Spleen (tissue), 13 donors: ENCODE measurements at regions of chr6 and their contacts with region 1.

Region 1: DNA sequence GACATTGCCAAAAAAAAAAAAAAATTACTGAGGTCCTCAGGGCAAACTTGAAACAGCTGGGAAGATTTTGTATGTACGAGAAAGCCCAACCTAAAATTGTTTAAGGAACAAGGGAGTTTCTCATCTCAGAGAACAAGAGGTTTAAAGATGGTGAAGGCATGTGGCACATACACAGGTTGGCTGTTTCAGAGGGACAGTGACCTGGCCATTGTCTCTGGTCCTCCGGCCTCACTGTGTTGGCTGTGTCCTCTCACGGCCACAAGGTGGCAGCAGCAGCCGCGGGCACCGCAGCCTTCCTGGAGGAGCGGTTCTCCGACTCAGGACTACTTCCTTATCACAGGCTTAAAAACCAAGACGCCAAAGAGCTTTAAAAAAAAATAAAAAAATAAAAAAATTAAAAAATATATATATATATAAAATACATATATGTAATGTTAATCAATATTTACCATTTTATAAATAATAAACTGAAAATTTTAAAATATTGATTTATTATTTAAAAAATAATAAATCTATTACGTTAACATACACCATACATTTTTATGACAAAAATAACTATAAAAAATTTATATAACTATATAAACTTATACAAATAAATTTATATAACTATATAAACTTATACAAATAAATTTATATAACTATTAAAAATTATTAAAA is 52.8 kb downstream of the GTF2H5 start:
- DNase-seq: peak; percentile 96
- H3K4me3 ChIP-seq: no peak overlapping the region
- H3K27ac ChIP-seq: no peak overlapping the region
- H3K4me1 ChIP-seq: peaks cover 0 to 9% (median 0%) of the 10 kb centered on the region in 6 donors
- H3K27me3 ChIP-seq: no peaks in the 10 kb centered on the region
- CTCF ChIP-seq: peak; percentile 79 to 97 (median 91)
- POLR2A ChIP-seq: no peak

Region 2: GRCh38 chr6:158387036-158387435 is 166.1 kb after region 1 on chr6:
- intact Hi-C with region 1: loop called (anchors 10 kb)
- DNase-seq: no peak
- H3K4me3 ChIP-seq: no peak overlapping the region
- H3K27ac ChIP-seq: no peak overlapping the region
- H3K4me1 ChIP-seq: no peaks in the 10 kb centered on the region
- H3K27me3 ChIP-seq: no peaks in the 10 kb centered on the region
- CTCF ChIP-seq: peak in 1 of 11 experiments; percentile 26
- POLR2A ChIP-seq: no peak

Region 3: DNA sequence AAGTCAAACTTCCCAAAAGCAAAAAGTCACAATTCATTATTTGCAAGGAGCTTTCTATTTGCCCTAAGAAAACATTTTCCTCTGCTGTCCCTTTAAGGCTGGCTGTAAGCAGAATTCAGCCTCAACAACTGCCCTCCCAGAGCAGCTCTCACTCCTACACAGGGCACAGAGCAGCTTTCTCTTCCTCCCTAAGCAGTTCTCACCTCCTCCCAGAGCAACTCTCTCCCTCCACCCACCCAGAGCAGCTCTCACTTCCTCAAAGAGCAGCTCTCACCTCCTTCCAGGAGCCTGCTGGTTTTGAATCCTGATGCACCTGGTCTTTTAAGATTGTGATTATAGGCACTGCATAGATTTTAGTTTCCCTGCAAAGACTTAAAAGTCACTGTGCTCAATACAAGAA is 218.3 kb after region 1 on chr6:
- intact Hi-C with region 1: no loop called
- DNase-seq: no peak
- H3K4me3 ChIP-seq: no peak overlapping the region
- H3K27ac ChIP-seq: no peak overlapping the region
- H3K4me1 ChIP-seq: peaks cover 0 to 10% (median 0%) of the 10 kb centered on the region in 6 donors
- H3K27me3 ChIP-seq: no peaks in the 10 kb centered on the region
- CTCF ChIP-seq: no peak
- POLR2A ChIP-seq: no peak

Region 4: DNA sequence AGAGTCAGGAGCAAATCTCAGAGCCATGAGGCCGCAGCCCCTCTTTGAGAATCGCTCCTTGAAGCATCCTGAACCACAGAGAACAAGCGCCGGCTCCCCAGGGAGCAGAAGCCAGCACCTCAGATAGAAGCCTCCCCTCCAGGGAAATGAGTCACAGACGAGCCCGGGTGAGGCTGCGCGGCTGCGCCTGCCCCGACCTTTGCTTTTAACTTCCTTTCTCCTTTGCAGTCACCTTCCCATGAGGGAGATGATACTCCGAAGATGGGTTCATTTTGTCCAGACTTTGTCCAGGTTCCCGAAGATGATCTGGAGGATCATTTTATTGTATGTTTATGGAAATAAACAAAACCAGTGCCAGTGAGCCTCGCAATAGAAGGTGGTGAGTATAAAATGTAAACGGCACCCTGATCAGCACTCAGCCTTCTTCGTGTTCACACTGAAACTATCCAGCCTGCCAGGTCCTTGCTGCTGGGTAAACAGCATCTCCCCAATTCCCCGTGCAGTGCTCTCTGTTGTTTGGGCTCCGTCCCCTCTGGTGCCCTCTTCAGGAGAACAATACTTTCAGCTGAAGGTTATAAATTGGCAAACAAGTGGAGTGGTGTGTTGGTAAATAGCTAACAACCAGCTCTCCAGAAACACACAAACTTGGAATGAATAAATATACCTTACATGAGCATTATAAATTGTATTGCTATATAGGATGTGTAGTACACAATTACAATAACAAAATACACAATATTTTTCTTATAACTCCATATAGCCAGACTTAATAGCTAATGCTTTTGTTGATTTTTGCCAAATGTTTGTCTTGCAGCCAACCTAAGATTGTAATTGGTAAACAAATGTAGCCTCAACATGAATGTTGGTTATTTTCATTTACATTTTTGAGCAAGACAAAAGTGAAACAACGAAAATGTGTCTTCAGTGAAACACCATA is 297.5 kb after region 1 on chr6:
- intact Hi-C with region 1: loop called (anchors 10 kb)
- DNase-seq: no peak
- H3K4me3 ChIP-seq: peak overlapping the region in 5 of 8 donors; percentile 0 to 58 (median 13)
- H3K27ac ChIP-seq: peak overlapping the region in 2 of 8 donors; percentile 36 to 51
- H3K4me1 ChIP-seq: peaks cover 6 to 40% (median 17%) of the 10 kb centered on the region in 6 donors
- H3K27me3 ChIP-seq: peaks cover 0 to 72% (median 35%) of the 10 kb centered on the region in 7 donors
- CTCF ChIP-seq: peak in 8 of 11 experiments; percentile 12 to 57 (median 47)
- POLR2A ChIP-seq: no peak

Region 5: DNA sequence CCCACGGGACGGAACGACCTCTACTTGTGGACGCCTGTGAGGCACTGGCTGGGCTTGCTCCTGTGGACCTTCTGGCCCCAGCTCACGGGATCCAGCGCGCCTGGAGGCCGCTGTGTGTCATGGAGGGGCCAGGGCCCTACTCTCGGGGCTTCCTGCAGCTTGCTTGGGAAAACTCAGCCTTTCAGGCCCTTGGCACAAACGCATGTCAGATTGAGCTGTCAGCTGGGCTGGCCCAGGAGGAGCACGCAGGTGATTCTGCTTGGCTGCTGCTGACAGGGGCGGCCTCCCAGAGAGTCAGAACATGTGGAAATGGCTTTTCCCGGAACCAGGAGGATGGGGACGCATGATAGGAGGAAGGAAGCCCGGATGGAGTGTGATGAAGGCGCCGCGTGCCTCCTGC is 378.7 kb after region 1 on chr6:
- intact Hi-C with region 1: loop called (anchors 5 kb)
- DNase-seq: no peak
- H3K4me3 ChIP-seq: no peak overlapping the region
- H3K27ac ChIP-seq: no peak overlapping the region
- H3K4me1 ChIP-seq: no peaks in the 10 kb centered on the region
- H3K27me3 ChIP-seq: no peaks in the 10 kb centered on the region
- CTCF ChIP-seq: no peak
- POLR2A ChIP-seq: no peak

Region 6: DNA sequence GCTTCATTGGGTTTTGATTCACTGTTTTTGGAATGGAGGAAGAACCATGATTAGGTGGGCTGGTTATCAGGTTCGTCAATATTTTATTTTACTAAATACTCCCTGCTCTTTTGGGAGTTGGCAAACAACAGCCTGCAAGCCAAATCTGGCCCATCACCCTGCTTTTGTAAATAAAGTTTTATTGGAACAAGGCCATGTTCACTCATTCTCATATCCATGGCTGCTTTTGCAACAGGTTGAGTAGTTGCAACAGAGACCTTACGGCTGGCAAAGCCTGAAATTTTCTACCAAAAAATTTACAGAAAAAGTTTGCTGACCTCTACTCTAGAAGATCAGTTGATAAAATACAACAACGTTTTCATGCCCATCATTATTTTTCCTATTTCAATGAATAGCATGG is 474.0 kb after region 1 on chr6:
- intact Hi-C with region 1: loop called (anchors 5 kb)
- DNase-seq: peak; percentile 4
- H3K4me3 ChIP-seq: no peak overlapping the region
- H3K27ac ChIP-seq: no peak overlapping the region
- H3K4me1 ChIP-seq: peaks cover 0 to 19% (median 10%) of the 10 kb centered on the region in 6 donors
- H3K27me3 ChIP-seq: no peaks in the 10 kb centered on the region
- CTCF ChIP-seq: no peak
- POLR2A ChIP-seq: no peak

Region 7: GRCh38 chr6:158972241-158973233 is 751.6 kb after region 1 on chr6:
- intact Hi-C with region 1: loop called (anchors 10 kb)
- DNase-seq: no peak
- H3K4me3 ChIP-seq: no peak overlapping the region
- H3K27ac ChIP-seq: no peak overlapping the region
- H3K4me1 ChIP-seq: peaks cover 0 to 9% (median 6%) of the 10 kb centered on the region in 6 donors
- H3K27me3 ChIP-seq: no peaks in the 10 kb centered on the region
- CTCF ChIP-seq: peak in 9 of 11 experiments; percentile 37 to 67 (median 60)
- POLR2A ChIP-seq: no peak